IMR-90 (cell line): ENCODE measurements at regions of chr15 and their contacts with region 1.

Region 1: GRCh38 chr15:44501768-44502366 is 35.1 kb upstream of the EIF3J start:
- DNase-seq: peak; percentile 66
- ATAC-seq: peak; percentile 82
- H3K4me3 ChIP-seq: no peak overlapping the region
- H3K27ac ChIP-seq: no peak overlapping the region
- H3K4me1 ChIP-seq: no peaks in the 10 kb centered on the region
- H3K27me3 ChIP-seq: no peaks in the 10 kb centered on the region
- CTCF ChIP-seq: peak; percentile 66
- POLR2A ChIP-seq: no peak
- RAD21 ChIP-seq: peak; percentile 75

Region 2: GRCh38 chr15:43872416-43873020 is 629.3 kb before region 1 on chr15:
- CTCF ChIA-PET with region 1: interaction called, 4 read pairs
- POLR2A ChIA-PET with region 1: no interaction called
- dilution Hi-C with region 1: no loop called
- in situ Hi-C with region 1: loop called (anchors 10 kb)
- intact Hi-C with region 1: loop called (anchors 1 kb)
- DNase-seq: peak; percentile 83
- ATAC-seq: peak; percentile 98
- H3K4me3 ChIP-seq: no peak overlapping the region
- H3K27ac ChIP-seq: no peak overlapping the region
- H3K4me1 ChIP-seq: no peaks in the 10 kb centered on the region
- H3K27me3 ChIP-seq: no peaks in the 10 kb centered on the region
- CTCF ChIP-seq: peak; percentile 81
- POLR2A ChIP-seq: no peak
- RAD21 ChIP-seq: peak; percentile 85

Region 3: DNA sequence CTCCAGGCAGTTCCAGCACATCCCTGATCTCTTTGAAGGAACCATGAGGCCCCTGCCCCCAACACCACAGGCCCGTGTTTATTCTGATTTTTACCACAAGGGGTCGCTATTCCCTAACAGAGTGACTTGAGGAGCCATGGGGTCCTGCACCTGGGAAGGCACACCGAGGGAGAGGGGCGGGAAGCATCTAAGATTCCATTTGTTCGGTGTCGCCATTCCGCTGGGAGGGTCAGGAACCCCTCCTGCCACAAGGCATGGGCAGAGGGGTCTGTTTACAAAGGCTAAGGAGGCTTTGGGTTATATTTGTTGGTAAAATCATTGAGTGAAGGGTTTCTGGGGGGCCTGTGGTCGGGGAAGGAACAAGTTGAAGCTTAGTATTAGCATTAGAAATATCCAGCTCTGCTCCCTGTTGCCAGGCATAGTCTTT is 598.0 kb before region 1 on chr15:
- CTCF ChIA-PET with region 1: no interaction called
- POLR2A ChIA-PET with region 1: no interaction called
- dilution Hi-C with region 1: no loop called
- in situ Hi-C with region 1: no loop called
- intact Hi-C with region 1: loop called (anchors 5 kb)
- DNase-seq: peak; percentile 58
- ATAC-seq: peak; percentile 94
- H3K4me3 ChIP-seq: no peak overlapping the region
- H3K27ac ChIP-seq: no peak overlapping the region
- H3K4me1 ChIP-seq: peaks cover 5% of the 10 kb centered on the region; the same call in 1 of the 2 replicates
- H3K27me3 ChIP-seq: no peaks in the 10 kb centered on the region
- CTCF ChIP-seq: peak; percentile 94
- POLR2A ChIP-seq: no peak
- RAD21 ChIP-seq: peak; percentile 97

Region 4: GRCh38 chr15:44066316-44066740 is 435.5 kb before region 1 on chr15:
- CTCF ChIA-PET with region 1: no interaction called
- POLR2A ChIA-PET with region 1: no interaction called
- dilution Hi-C with region 1: no loop called
- in situ Hi-C with region 1: no loop called
- intact Hi-C with region 1: loop called (anchors 1 kb)
- DNase-seq: peak; percentile 72
- ATAC-seq: peak; percentile 79
- H3K4me3 ChIP-seq: no peak overlapping the region
- H3K27ac ChIP-seq: no peak overlapping the region
- H3K4me1 ChIP-seq: no peaks in the 10 kb centered on the region
- H3K27me3 ChIP-seq: no peaks in the 10 kb centered on the region
- CTCF ChIP-seq: peak; percentile 85
- POLR2A ChIP-seq: no peak
- RAD21 ChIP-seq: peak; percentile 79

Region 5: GRCh38 chr15:44215594-44215993 is 286.3 kb before region 1 on chr15:
- CTCF ChIA-PET with region 1: no interaction called
- POLR2A ChIA-PET with region 1: interaction called, 5 read pairs
- dilution Hi-C with region 1: no loop called
- in situ Hi-C with region 1: no loop called
- intact Hi-C with region 1: loop called (anchors 5 kb)
- DNase-seq: peak; percentile 90
- ATAC-seq: peak; percentile 81
- H3K4me3 ChIP-seq: no peak overlapping the region
- H3K27ac ChIP-seq: no peak overlapping the region
- H3K4me1 ChIP-seq: 0 out of 2 replicates have a peak, but pooled peaks cover 2% of the 10 kb centered on the region
- H3K27me3 ChIP-seq: no peaks in the 10 kb centered on the region
- CTCF ChIP-seq: no peak
- POLR2A ChIP-seq: no peak
- RAD21 ChIP-seq: no peak

Region 6: GRCh38 chr15:44286814-44287452 is 214.9 kb before region 1 on chr15:
- CTCF ChIA-PET with region 1: interaction called, 4 read pairs
- POLR2A ChIA-PET with region 1: no interaction called
- dilution Hi-C with region 1: no loop called
- in situ Hi-C with region 1: no loop called
- intact Hi-C with region 1: loop called (anchors 1 kb)
- DNase-seq: no peak
- ATAC-seq: no peak
- H3K4me3 ChIP-seq: no peak overlapping the region
- H3K27ac ChIP-seq: no peak overlapping the region
- H3K4me1 ChIP-seq: peaks cover 4% of the 10 kb centered on the region; the same call in 1 of the 2 replicates
- H3K27me3 ChIP-seq: no peaks in the 10 kb centered on the region
- CTCF ChIP-seq: no peak
- POLR2A ChIP-seq: no peak
- RAD21 ChIP-seq: no peak